ENCODE measurements at regions of chr7 and their contacts with region 1.

Region 1: GRCh38 chr7:108181073-108181985 is 51.2 kb upstream of the LAMB4 start:
- ATAC-seq: peak in 7 of 8 experiments; percentile 36 to 62 (median 52)
- H3K4me3 ChIP-seq: no peak overlapping the region
- H3K27ac ChIP-seq: no peak overlapping the region
- H3K4me1 ChIP-seq: peaks cover 0 to 2% of the 10 kb centered on the region in 2 donors

Region 2: GRCh38 chr7:108459931-108460551 is 278.7 kb after region 1 on chr7:
- in situ Hi-C with region 1: loop called in 4 of 9 experiments (anchors 25 kb)
- ATAC-seq: peak in 1 of 8 experiments; percentile 7
- H3K4me3 ChIP-seq: no peak overlapping the region
- H3K27ac ChIP-seq: no peak overlapping the region
- H3K4me1 ChIP-seq: peaks cover 3 to 12% of the 10 kb centered on the region in 2 donors

Region 3: GRCh38 chr7:108486291-108486966 is 305.1 kb after region 1 on chr7:
- in situ Hi-C with region 1: loop called in 3 of 9 experiments (anchors 10 to 25 kb)
- ATAC-seq: no peak
- H3K4me3 ChIP-seq: no peak overlapping the region
- H3K27ac ChIP-seq: no peak overlapping the region
- H3K4me1 ChIP-seq: no peaks in the 10 kb centered on the region

Region 4: GRCh38 chr7:108497082-108497725 is 315.9 kb after region 1 on chr7:
- in situ Hi-C with region 1: loop called in 2 of 9 experiments (anchors 25 kb)
- ATAC-seq: peak in 4 of 8 experiments; percentile 25 to 64 (median 49)
- H3K4me3 ChIP-seq: no peak overlapping the region
- H3K27ac ChIP-seq: no peak overlapping the region
- H3K4me1 ChIP-seq: no peaks in the 10 kb centered on the region

Measured in motor neuron (in vitro differentiated cells).